Caco-2 (cell line): ENCODE measurements at regions of chr3 and their contacts with region 1.

Region 1: DNA sequence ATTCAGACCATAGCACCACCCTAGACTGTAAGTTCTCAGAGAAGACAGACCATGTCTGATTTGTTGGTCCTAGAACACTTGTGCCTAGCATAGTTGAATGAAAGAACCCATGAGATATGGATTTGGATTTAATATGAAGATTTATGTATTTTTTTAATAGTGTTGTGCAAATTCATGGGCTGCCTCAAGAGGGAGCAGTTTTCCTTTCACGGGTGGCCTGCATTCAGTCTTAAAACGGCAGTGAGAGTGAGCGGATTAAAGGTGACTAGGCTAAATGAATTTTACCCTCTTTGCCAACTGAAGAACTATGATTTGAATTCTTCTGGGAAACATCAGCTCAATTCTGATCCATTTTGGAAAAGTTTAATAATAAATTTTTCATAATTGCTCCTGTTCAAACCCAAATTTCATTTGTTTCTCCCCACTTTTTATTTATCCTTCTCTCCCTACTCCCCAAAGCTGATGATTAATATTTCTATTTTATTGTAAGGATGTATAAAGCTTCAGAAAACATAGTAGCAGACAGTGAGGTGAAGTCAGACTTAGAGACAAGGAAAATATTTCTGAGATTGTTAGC is 67.3 kb downstream of the MORC1 start:
- DNase-seq: peak in 1 of 2 experiments; percentile 35
- H3K4me3 ChIP-seq: no peak overlapping the region
- H3K4me3 Mint-ChIP-seq: no peak overlapping the region
- H3K27ac Mint-ChIP-seq: no peak overlapping the region
- H3K4me1 ChIP-seq: no peaks in the 10 kb centered on the region
- H3K4me1 Mint-ChIP-seq: peaks cover 6% of the 10 kb centered on the region
- H3K27me3 ChIP-seq: no peaks in the 10 kb centered on the region
- H3K27me3 Mint-ChIP-seq: no peaks in the 10 kb centered on the region
- CTCF ChIP-seq: peak; percentile 65 to 70

Region 2: GRCh38 chr3:109081746-109082510 is 31.2 kb after region 1 on chr3:
- CTCF ChIA-PET with region 1: interaction called, 4 read pairs
- POLR2A ChIA-PET with region 1: no interaction called
- intact Hi-C with region 1: loop called (anchors 1 kb)
- DNase-seq: peak; percentile 36 to 47
- H3K4me3 ChIP-seq: no peak overlapping the region
- H3K4me3 Mint-ChIP-seq: no peak overlapping the region
- H3K27ac Mint-ChIP-seq: no peak overlapping the region
- H3K4me1 ChIP-seq: no peaks in the 10 kb centered on the region
- H3K4me1 Mint-ChIP-seq: no peaks in the 10 kb centered on the region
- H3K27me3 ChIP-seq: no peaks in the 10 kb centered on the region
- H3K27me3 Mint-ChIP-seq: peaks cover 19% of the 10 kb centered on the region
- CTCF ChIP-seq: peak; percentile 67 to 69